ENCODE measurements at regions of chr1 and their contacts with region 1.

Region 1: DNA sequence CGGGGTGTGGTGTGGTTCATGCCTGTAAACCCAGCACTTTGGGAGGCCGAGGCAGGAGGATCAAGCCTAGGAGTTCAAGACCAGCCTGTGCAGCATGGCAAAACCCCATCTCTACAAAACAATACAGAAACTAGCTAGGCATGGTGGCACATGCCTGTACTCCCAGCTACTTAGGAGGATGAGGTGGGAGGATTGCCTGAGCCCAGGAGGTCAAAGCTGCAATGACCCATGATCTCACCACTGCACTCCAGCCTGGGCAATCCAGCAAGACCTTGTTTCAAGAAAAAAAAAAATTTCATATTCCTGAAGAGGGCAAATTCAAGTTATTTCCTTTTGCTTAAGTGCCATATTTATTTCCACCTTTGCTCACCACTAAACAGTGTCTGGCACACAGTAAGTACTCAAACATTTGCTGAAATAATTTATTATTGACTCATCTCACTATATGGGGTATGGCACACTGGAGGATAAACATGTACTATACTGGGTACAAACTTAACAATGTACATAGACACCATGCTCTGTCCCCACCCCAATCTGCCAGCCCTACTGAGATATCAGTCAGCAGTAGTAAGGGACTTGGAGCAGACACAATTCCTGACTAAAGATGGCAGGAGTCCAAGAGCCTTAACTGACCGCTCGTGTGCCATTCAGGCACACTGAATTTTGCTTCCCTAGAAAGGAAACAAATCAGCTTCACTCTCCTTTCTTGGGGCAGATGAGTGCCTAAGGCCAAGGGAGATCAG is 15.5 kb downstream of the MEAF6 start:
- DNase-seq: peak; percentile 27
- H3K4me3 ChIP-seq: no peak overlapping the region
- H3K27ac ChIP-seq: peak overlapping the region; percentile 11
- H3K4me1 ChIP-seq: peaks cover 9% of the 10 kb centered on the region
- H3K27me3 ChIP-seq: no peaks in the 10 kb centered on the region
- CTCF ChIP-seq: no peak

Region 2: DNA sequence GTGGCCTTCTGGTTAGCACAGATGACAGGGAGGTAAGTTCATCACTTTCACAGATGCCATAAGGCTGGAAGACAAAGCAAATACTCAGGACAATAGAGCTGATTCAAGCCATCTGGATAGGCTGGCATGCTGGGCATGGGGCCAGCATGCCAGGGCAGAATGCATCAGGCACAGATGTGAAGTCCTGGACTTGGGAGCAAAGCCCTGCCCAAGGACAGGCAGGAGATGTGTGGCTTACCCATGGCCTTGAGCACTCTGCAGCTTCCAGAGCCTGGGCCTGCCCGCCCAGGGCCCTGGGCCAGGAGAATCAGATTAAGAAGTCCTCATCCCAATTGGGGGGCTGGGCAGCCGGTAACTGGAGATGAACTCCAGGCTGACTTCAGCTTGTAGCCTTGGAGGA is 160.4 kb before region 1 on chr1:
- CTCF ChIA-PET with region 1: no interaction called
- dilution Hi-C with region 1: no loop called
- in situ Hi-C with region 1: no loop called
- intact Hi-C with region 1: no loop called
- DNase-seq: no peak
- H3K4me3 ChIP-seq: no peak overlapping the region
- H3K27ac ChIP-seq: no peak overlapping the region
- H3K4me1 ChIP-seq: no peaks in the 10 kb centered on the region
- H3K27me3 ChIP-seq: no peaks in the 10 kb centered on the region
- CTCF ChIP-seq: no peak

Region 3: GRCh38 chr1:37486680-37487618 is 12.1 kb before region 1 on chr1:
- CTCF ChIA-PET with region 1: interaction called, 12 read pairs
- dilution Hi-C with region 1: no loop called
- in situ Hi-C with region 1: no loop called
- intact Hi-C with region 1: no loop called
- DNase-seq: peak; percentile 57
- H3K4me3 ChIP-seq: no peak overlapping the region
- H3K27ac ChIP-seq: peak overlapping the region; percentile 39
- H3K4me1 ChIP-seq: peaks cover 39% of the 10 kb centered on the region
- H3K27me3 ChIP-seq: no peaks in the 10 kb centered on the region
- CTCF ChIP-seq: peak; percentile 97 to 99

Region 4: DNA sequence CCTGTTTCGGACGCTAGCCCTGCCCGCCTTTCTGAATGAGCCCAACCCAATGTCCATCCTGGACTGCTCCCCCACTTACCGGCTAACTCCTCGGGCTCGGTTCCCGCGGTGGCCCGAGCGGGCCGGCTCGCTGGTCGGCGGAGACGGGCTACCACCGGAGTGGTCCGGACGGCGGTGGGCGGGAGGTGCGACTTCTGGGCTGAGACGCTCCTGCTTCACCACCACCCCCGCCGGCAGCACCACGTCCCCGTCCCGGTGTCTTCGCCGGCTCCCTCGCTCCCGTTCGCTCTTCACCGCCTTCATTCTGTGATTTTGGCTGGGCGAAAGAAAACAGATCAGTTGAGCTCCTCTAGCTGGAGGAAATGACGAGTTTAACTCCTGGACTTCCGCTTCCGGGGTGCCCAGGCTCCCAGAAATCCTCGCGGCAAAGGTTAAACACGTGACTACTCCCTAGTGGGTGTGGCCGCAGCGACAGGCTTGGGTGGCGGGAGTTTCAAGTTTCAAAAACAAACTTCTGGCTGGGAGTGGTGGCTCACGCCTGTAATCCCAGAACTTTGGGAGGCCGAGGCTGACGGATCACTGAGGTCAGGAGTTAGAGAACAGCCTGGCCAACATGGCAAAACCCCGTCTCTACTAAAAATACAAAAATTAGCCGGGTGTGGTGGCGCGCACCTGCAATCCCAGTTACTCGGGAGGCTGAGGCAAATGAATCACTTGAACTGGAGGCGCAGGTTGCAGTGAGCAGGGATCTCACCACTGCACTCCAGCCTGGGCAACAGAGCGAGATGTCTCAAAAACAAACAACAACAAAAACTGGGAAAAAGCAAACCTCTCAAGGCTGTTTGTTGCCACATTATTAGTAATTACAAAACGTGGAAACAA is 55.1 kb after region 1 on chr1 and contains the start of gene SNIP1:
- CTCF ChIA-PET with region 1: no interaction called
- dilution Hi-C with region 1: loop called (anchors 10 kb)
- in situ Hi-C with region 1: no loop called
- intact Hi-C with region 1: no loop called
- DNase-seq: peak; percentile 88
- H3K4me3 ChIP-seq: peak within 1 kb of the TSS; percentile 93 to 97 (median 97)
- H3K27ac ChIP-seq: peak within 1 kb of the TSS; percentile 85
- H3K4me1 ChIP-seq: peaks cover 19% of the 10 kb centered on the region
- H3K27me3 ChIP-seq: no peaks in the 10 kb centered on the region
- CTCF ChIP-seq: no peak
- total RNA-seq, gene SNIP1: 22.5 to 23.0 TPM

Region 5: GRCh38 chr1:37667023-37667761 is 168.1 kb after region 1 on chr1:
- CTCF ChIA-PET with region 1: no interaction called
- dilution Hi-C with region 1: loop called (anchors 10 kb)
- in situ Hi-C with region 1: no loop called
- intact Hi-C with region 1: no loop called
- DNase-seq: no peak
- H3K4me3 ChIP-seq: no peak overlapping the region
- H3K27ac ChIP-seq: no peak overlapping the region
- H3K4me1 ChIP-seq: no peaks in the 10 kb centered on the region
- H3K27me3 ChIP-seq: no peaks in the 10 kb centered on the region
- CTCF ChIP-seq: no peak